Transverse colon (tissue), 4 donors: ENCODE measurements at regions of chr5 and their contacts with region 1.

Region 1: DNA sequence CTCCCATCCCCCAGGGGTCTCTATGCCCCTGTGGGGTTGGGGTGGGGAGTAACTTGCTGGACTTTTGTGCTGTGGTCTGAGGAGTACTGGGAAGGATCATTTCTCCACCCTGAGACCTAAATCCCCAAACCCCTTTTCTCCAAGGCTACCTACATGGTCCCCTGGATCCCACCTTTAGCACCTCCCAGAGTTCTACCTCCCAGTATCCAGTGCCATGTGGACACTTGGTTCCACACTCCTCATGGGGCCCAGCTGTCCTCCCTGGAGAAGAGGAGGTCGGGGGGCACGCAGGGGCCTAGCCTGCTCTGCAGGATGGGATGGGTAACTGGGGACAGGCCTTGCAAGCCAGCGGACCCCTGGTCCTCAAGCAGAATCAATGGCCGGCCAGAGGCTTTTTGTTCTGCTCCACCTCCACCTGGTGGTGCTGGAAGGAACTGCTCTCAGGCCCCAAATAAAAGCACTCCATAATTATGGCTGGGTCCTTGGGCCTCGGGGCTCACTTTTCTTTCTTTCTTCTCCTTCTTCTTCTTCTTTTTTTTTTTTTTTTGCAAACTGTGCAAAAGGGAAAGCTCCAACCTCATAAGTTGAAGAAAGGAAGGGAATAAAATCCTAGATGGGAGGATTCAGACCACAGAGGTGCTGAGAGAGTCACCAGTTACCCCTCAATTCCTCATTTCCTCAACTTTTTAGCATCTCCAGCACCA is 68.4 kb downstream of the PSD2 start:
- DNase-seq: peak; percentile 67
- H3K4me3 ChIP-seq: no peak overlapping the region
- H3K27ac ChIP-seq: no peak overlapping the region
- H3K4me1 ChIP-seq: peaks cover 0 to 13% (median 2%) of the 10 kb centered on the region in 4 donors
- H3K27me3 ChIP-seq: no peaks in the 10 kb centered on the region
- CTCF ChIP-seq: peak; percentile 81 to 92 (median 90)
- EP300 ChIP-seq: no peak
- POLR2A ChIP-seq: no peak

Region 2: DNA sequence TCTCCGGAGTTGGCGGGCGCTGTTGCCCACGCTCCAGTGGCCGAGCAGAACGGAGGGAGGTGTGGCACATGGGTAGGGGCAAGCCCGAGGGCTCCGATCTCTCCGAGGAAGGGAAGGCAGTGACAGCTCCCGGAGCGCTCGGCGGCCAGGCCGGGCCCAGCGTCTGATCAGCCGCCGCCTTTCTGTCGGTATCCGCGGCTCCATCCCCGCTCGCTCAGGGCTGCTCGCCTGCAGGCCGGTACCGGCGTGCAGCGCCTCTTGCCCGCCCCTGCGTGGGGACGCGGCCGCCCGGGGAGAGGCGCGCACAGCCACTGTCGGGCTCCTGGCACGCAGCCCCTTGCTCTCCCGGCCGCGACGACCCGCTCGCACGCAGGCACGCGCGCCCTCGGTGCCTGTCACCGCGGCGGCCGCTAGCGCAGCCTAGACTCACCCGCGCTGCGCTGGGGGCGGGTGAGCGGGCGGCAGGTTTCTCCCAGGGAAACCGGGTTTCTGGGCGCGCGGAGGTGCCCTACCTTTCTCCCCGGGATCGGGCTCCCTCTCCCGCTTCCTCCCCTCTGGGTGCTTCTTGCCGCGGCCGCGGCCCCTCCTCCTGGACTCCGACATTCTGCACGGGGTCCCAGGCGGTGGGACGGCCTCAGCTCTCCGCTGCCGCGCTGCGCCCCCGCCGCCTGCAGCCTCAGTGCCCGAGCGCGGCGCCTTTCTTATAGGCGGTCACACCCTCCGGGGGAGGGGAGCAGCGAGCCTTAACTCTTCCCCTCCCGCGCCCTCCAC is 40.0 kb after region 1 on chr5:
- in situ Hi-C with region 1: no loop called
- intact Hi-C with region 1: loop called (anchors 1 kb)
- DNase-seq: no peak
- H3K4me3 ChIP-seq: peak overlapping the region; percentile 19 to 55 (median 30)
- H3K27ac ChIP-seq: no peak overlapping the region
- H3K4me1 ChIP-seq: peaks cover 10 to 24% (median 17%) of the 10 kb centered on the region in 4 donors
- H3K27me3 ChIP-seq: peaks cover 62% of the 10 kb centered on the region
- CTCF ChIP-seq: no peak
- EP300 ChIP-seq: no peak
- POLR2A ChIP-seq: no peak

Region 3: GRCh38 chr5:140432916-140433315 is 568.9 kb after region 1 on chr5:
- in situ Hi-C with region 1: no loop called
- intact Hi-C with region 1: no loop called
- DNase-seq: no peak
- H3K4me3 ChIP-seq: no peak overlapping the region
- H3K27ac ChIP-seq: no peak overlapping the region
- H3K4me1 ChIP-seq: peaks cover 0 to 8% (median 5%) of the 10 kb centered on the region in 4 donors
- H3K27me3 ChIP-seq: no peaks in the 10 kb centered on the region
- CTCF ChIP-seq: no peak
- EP300 ChIP-seq: no peak
- POLR2A ChIP-seq: no peak

Region 4: DNA sequence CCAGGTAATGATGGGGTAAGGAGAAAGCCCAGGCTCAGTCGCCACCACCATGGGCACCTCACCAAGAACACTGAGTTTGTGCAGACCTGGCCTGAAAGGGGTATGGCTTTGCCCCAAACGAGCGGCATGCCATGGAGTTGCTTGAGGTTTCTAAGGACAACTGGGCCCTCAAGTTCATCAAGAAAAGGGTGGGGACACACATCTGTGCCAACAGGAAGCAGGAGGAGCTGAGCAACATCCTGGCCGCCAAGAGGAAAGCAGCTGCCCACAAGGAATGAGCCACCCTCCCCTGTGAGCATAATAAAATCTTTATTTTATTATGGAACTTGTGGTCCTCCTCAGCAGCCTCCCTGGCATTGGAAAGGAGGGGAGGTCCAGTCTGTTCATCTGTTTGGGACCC is 745.1 kb after region 1 on chr5:
- in situ Hi-C with region 1: no loop called
- intact Hi-C with region 1: no loop called
- DNase-seq: peak; percentile 80
- H3K4me3 ChIP-seq: no peak overlapping the region
- H3K27ac ChIP-seq: peak overlapping the region; percentile 51 to 81 (median 74)
- H3K4me1 ChIP-seq: peaks cover 2 to 36% (median 10%) of the 10 kb centered on the region in 4 donors
- H3K27me3 ChIP-seq: no peaks in the 10 kb centered on the region
- CTCF ChIP-seq: no peak
- EP300 ChIP-seq: no peak
- POLR2A ChIP-seq: no peak